ENCODE measurements at regions of chr2 and their contacts with region 1.

Region 1: GRCh38 chr2:231463698-231464575 is at the start of gene NCL:
- DNase-seq: peak; percentile 54
- ATAC-seq: peak; percentile 92
- H3K4me3 ChIP-seq: peak within 1 kb of the TSS; percentile 79 to 93
- H3K27ac ChIP-seq: peak within 1 kb of the TSS; percentile 98
- H3K4me1 ChIP-seq: peaks cover 7 to 25% of the 10 kb centered on the region in 2 experiments
- H3K27me3 ChIP-seq: no peaks in the 10 kb centered on the region
- CTCF ChIP-seq: no peak
- POLR2A ChIP-seq: peak; percentile 97
- RAD21 ChIP-seq: no peak
- total RNA-seq, gene NCL: 1,077 TPM

Region 2: DNA sequence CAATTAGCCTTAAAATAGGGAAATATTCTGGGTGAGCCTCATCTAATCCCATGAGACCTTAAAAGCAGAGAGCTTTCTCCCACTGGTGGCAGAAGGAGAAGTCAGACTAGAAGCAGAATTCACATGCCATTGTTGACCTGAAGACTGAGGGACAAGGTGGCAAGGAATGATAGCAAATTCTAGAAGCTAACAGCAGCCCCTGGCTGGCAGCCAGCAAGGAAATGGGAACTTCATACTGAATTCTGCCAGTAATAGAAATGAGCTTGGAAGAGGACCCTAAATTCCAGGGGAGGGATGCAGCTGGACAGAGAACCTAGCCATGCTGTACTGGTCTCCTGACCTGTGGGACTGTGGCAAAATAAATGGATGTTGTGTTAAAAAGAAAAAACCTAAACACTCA is 48.9 kb before region 1 on chr2:
- CTCF ChIA-PET with region 1: no interaction called
- POLR2A ChIA-PET with region 1: no interaction called
- RAD21 ChIA-PET with region 1: no interaction called
- intact Hi-C with region 1: no loop called
- DNase-seq: no peak
- ATAC-seq: no peak
- H3K4me3 ChIP-seq: no peak overlapping the region
- H3K27ac ChIP-seq: no peak overlapping the region
- H3K4me1 ChIP-seq: peaks cover 0 to 13% of the 10 kb centered on the region in 2 experiments; a peak in 1 of 4 replicates
- H3K27me3 ChIP-seq: no peaks in the 10 kb centered on the region
- CTCF ChIP-seq: no peak
- POLR2A ChIP-seq: no peak
- RAD21 ChIP-seq: no peak

Region 3: DNA sequence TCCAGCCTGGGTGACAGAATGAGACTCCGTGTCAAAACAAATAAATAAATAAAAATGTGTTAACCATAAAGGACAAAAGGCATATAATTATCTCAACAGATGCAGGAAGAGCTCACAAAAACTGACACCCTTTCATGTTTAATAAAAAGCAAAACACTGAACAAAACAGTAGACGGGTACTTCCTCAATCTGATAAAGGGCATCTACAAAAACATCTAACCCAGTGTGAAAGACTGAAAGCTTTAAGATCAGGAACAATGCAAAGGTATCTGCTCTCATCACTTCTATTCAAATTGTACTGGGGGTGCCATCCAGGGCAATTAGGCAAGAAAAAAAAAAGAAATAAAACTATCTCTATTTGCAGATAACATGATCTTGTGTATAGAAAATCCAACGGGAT is 12.0 kb after region 1 on chr2:
- CTCF ChIA-PET with region 1: interaction called, 10 read pairs
- POLR2A ChIA-PET with region 1: interaction called, 26 read pairs
- RAD21 ChIA-PET with region 1: no interaction called
- intact Hi-C with region 1: no loop called
- DNase-seq: no peak
- ATAC-seq: no peak
- H3K4me3 ChIP-seq: no peak overlapping the region
- H3K27ac ChIP-seq: no peak overlapping the region
- H3K4me1 ChIP-seq: no peaks in the 10 kb centered on the region
- H3K27me3 ChIP-seq: no peaks in the 10 kb centered on the region
- CTCF ChIP-seq: no peak
- POLR2A ChIP-seq: no peak
- RAD21 ChIP-seq: no peak

Region 4: DNA sequence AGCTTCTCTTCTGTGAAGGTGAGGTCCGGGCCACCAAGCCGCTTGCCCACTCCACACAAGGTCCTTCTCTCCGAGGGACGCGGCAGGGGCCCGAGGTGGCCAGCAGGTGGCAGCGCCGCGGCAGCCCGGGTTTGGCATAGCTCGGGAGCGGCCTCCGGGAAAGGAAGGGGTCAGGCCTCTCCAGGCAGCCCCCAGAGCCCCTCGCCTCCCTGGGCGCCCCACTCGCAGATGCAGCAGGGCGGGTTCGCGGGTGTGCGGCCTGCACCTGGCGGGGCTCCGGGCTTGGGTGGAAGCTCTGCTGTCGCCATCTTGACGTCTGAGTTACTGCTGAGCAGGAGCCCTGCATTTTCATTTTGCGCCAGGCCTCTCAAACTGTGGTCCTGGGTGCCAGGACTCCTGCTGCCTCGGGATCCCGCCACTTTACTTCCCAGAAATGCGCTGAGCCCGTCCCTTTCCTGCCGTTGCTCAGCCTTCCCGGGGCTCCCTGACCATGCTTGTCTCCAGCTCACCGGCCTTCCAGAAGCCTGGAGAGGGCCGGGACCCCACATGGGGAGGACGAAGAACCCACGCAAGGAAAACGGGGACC is 19.0 kb after region 1 on chr2:
- CTCF ChIA-PET with region 1: interaction called, 10 read pairs
- POLR2A ChIA-PET with region 1: interaction called, 26 read pairs
- RAD21 ChIA-PET with region 1: no interaction called
- intact Hi-C with region 1: no loop called
- DNase-seq: no peak
- ATAC-seq: peak; percentile 98
- H3K4me3 ChIP-seq: no peak overlapping the region
- H3K27ac ChIP-seq: no peak overlapping the region
- H3K4me1 ChIP-seq: peaks cover 0 to 7% of the 10 kb centered on the region in 2 experiments; a peak in 1 of 4 replicates
- H3K27me3 ChIP-seq: no peaks in the 10 kb centered on the region
- CTCF ChIP-seq: peak; percentile 55 to 98 (median 85)
- POLR2A ChIP-seq: no peak
- RAD21 ChIP-seq: peak; percentile 57

Region 5: GRCh38 chr2:231621129-231621879 is 157.4 kb after region 1 on chr2:
- CTCF ChIA-PET with region 1: no interaction called
- POLR2A ChIA-PET with region 1: no interaction called
- RAD21 ChIA-PET with region 1: no interaction called
- intact Hi-C with region 1: no loop called
- DNase-seq: peak; percentile 86
- ATAC-seq: peak; percentile 82
- H3K4me3 ChIP-seq: peak overlapping the region; percentile 23 to 48
- H3K27ac ChIP-seq: peak overlapping the region; percentile 74
- H3K4me1 ChIP-seq: peaks cover 59 to 74% of the 10 kb centered on the region in 2 experiments
- H3K27me3 ChIP-seq: no peaks in the 10 kb centered on the region
- CTCF ChIP-seq: no peak
- POLR2A ChIP-seq: no peak
- RAD21 ChIP-seq: no peak

Measured in HCT116 (cell line).